Ovary (tissue), 10 donors: ENCODE measurements at regions of chr1 and their contacts with region 1.

Region 1: DNA sequence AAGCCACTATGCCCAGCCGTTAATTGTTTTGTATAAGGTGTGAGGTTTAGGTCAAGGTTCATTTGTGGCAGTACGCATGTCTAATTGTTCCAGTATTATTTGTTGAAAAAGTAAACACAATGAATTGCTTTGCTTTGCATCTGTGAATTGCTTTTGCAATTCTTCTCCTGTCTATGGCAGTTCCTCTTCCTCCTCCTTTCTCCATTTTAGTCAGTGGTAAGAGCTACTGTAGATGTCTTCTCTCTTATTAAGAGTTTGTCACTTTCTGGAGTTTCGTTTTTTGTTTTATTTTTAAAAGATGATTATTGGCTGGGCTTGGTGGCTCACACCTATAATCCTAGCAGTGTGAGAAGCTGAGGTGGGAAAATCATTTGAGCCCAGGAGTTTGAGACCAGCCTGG is 29.2 kb downstream of the C1orf185 start:
- DNase-seq: no peak
- H3K4me3 ChIP-seq: no peak overlapping the region
- H3K27ac ChIP-seq: no peak overlapping the region
- H3K4me1 ChIP-seq: no peaks in the 10 kb centered on the region
- H3K27me3 ChIP-seq: no peaks in the 10 kb centered on the region
- CTCF ChIP-seq: no peak
- EP300 ChIP-seq: no peak
- POLR2A ChIP-seq: no peak

Region 2: GRCh38 chr1:50148142-50148923 is 982.9 kb before region 1 on chr1:
- intact Hi-C with region 1: loop called in 1 of 4 experiments (anchors 5 kb)
- DNase-seq: no peak
- H3K4me3 ChIP-seq: no peak overlapping the region
- H3K27ac ChIP-seq: no peak overlapping the region
- H3K4me1 ChIP-seq: no peaks in the 10 kb centered on the region
- H3K27me3 ChIP-seq: no peaks in the 10 kb centered on the region
- CTCF ChIP-seq: no peak
- EP300 ChIP-seq: no peak
- POLR2A ChIP-seq: no peak

Region 3: DNA sequence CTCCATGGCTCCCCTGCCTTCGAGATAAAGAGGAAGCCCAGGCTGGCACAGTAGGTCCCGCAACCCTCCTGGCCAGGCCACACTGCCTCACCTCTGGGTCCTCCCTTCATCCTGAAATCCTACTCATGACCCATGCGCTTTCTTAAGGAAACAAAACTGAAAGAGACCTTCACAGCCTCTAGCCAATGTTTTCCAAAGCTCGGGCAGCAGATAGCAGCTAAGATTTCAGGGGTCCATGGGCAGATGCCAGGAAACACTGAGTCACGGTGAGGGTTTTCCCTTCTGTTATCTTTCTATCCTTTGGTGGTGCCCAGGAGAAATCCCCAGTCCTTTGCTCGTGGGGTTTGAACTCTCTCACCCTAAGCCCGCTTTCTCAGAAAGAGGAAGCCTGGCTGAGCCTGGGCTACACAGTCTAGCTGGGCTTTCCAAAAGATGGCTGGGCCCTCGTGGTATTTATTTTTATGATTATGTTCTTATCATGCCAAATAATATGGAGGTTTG is 172.6 kb after region 1 on chr1:
- intact Hi-C with region 1: no loop called
- DNase-seq: peak in 2 of 5 donors; percentile 48 to 50
- H3K4me3 ChIP-seq: no peak overlapping the region
- H3K27ac ChIP-seq: peak overlapping the region in 1 of 2 donors; percentile 46
- H3K4me1 ChIP-seq: no peaks in the 10 kb centered on the region
- H3K27me3 ChIP-seq: no peaks in the 10 kb centered on the region
- CTCF ChIP-seq: no peak
- EP300 ChIP-seq: no peak
- POLR2A ChIP-seq: no peak

Region 4: GRCh38 chr1:51636764-51637522 is 505.8 kb after region 1 on chr1:
- intact Hi-C with region 1: no loop called
- DNase-seq: peak; percentile 51 to 80 (median 59)
- H3K4me3 ChIP-seq: no peak overlapping the region
- H3K27ac ChIP-seq: peak overlapping the region in 1 of 2 donors; percentile 36
- H3K4me1 ChIP-seq: peaks cover 16% of the 10 kb centered on the region
- H3K27me3 ChIP-seq: no peaks in the 10 kb centered on the region
- CTCF ChIP-seq: no peak
- EP300 ChIP-seq: no peak
- POLR2A ChIP-seq: no peak